ENCODE measurements at regions of chr7 and their contacts with region 1.

Region 1: DNA sequence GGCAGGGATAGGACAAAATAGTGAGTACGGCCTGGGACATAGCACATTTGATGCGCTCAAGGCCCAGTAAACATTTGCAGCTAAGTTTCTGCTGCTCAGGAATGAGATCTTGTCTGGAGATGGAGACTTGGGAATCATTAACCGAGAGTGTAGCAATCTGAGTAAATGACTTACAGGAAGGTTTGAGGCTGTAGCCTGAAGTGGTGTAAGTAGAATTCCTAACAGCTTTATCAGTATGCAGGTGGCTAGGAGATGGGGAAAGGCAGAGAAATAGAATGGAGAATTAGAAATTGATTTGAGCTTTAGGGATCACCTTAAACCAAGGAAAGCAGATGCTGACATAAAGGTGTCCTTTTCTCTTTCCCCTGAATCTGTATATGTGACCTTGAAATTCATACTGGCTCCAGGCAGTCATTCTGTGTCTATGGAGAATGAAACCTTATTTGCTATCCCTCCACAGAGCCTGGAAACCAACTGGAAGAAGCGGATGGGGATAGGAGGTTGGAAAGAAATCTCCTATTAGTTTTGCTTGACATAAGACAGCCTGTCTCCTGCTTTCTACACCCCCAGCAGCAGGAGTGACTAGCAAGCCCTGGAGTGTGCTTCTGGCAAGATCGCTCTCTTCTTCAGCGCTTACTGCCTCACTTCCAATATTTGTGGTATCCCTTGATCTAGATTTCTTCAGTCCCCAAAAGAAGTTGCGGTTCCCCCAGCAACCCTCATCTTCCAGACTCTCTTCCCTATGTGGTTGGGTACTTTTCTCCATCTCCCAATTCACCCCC is 6.4 kb upstream of the PON2 start:
- DNase-seq: peak; percentile 93
- ATAC-seq: peak; percentile 92
- H3K4me3 ChIP-seq: peak overlapping the region in 2 of 3 experiments; percentile 14 to 35; a peak in 2 of 6 replicates
- H3K27ac ChIP-seq: peak overlapping the region; percentile 74
- H3K4me1 ChIP-seq: peaks cover 89% of the 10 kb centered on the region
- H3K27me3 ChIP-seq: no peaks in the 10 kb centered on the region
- CTCF ChIP-seq: no peak
- EP300 ChIP-seq: peak in 1 of 2 experiments; percentile 81; a peak in 2 of 4 replicates
- POLR2A ChIP-seq: peak; percentile 53 to 57; a peak in 3 of 4 replicates
- RAD21 ChIP-seq: no peak

Region 2: GRCh38 chr7:95396136-95397032 is 44.8 kb before region 1 on chr7 and contains the start of gene PON3:
- CTCF ChIA-PET with region 1: no interaction called
- POLR2A ChIA-PET with region 1: interaction called, 39 read pairs
- in situ Hi-C with region 1: no loop called
- intact Hi-C with region 1: loop called (anchors 2 kb)
- DNase-seq: peak; percentile 68
- ATAC-seq: peak; percentile 95
- H3K4me3 ChIP-seq: peak within 1 kb of the TSS; percentile 76 to 92 (median 91)
- H3K27ac ChIP-seq: peak within 1 kb of the TSS; percentile 76
- H3K4me1 ChIP-seq: peaks cover 32% of the 10 kb centered on the region
- H3K27me3 ChIP-seq: no peaks in the 10 kb centered on the region; a peak in 1 of 5 replicates
- CTCF ChIP-seq: peak; percentile 77
- EP300 ChIP-seq: no peak; a peak in 1 of 4 replicates
- POLR2A ChIP-seq: peak; percentile 43 to 70
- RAD21 ChIP-seq: peak; percentile 59
- total RNA-seq, gene PON3: 14.1 and 23.6 TPM in 2 replicates

Region 3: GRCh38 chr7:95470452-95470851 is 29.2 kb after region 1 on chr7:
- CTCF ChIA-PET with region 1: no interaction called
- POLR2A ChIA-PET with region 1: interaction called, 3 read pairs
- in situ Hi-C with region 1: loop called (anchors 5 kb)
- intact Hi-C with region 1: loop called (anchors 2 kb)
- DNase-seq: peak; percentile 82
- ATAC-seq: peak; percentile 91
- H3K4me3 ChIP-seq: no peak overlapping the region; a peak in 1 of 6 replicates
- H3K27ac ChIP-seq: peak overlapping the region; percentile 30
- H3K4me1 ChIP-seq: peaks cover 35% of the 10 kb centered on the region
- H3K27me3 ChIP-seq: no peaks in the 10 kb centered on the region
- CTCF ChIP-seq: no peak
- EP300 ChIP-seq: peak in 1 of 2 experiments; percentile 84; a peak in 2 of 4 replicates
- POLR2A ChIP-seq: no peak
- RAD21 ChIP-seq: no peak

Measured in HepG2 (cell line).